H1 (cell line): ENCODE measurements at regions of chr18 and their contacts with region 1.

Region 1: GRCh38 chr18:46939337-46939963 is 22.0 kb downstream of the KATNAL2 start:
- DNase-seq: no peak
- H3K4me3 ChIP-seq: no peak overlapping the region
- H3K27ac ChIP-seq: no peak overlapping the region
- H3K4me1 ChIP-seq: peaks cover 0 to 5% (median 2%) of the 10 kb centered on the region in 4 experiments; a peak in 3 of 7 replicates
- H3K27me3 ChIP-seq: no peaks in the 10 kb centered on the region
- CTCF ChIP-seq: no peak
- EP300 ChIP-seq: no peak
- POLR2A ChIP-seq: no peak
- RAD21 ChIP-seq: no peak

Region 2: DNA sequence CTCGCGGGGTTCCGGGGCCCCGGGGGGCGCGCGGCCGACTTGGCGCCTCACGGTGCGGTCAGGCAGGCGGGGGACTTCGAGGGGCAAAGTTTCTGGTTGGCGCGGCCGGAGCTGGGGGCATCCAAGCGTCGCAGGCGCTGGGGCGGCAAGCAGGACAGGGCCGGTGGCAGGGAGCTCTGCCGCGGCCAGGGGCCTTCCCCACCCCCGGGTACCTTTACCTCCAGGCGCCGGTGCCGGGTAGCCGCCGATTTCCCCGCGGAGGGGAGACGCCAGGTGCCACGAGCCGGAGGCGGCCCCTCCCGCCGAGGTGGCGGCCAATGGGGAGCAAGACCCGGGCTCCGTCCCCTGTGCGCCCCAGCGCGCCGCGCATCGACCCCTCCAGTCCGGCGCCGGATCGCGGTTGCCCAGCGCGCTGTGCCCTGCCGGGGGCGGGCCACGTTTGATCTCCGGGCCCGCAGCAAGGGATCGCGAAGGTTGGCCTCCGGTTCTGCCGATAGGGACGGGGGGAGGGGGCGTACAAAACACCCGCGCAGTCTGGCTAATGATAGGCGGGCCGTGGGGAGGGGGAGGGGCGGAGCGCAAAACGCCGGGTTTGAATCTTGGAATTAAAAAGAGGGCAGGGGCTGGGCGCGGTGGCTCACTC is 182.8 kb before region 1 on chr18 and contains the start of gene ST8SIA5:
- CTCF ChIA-PET with region 1: no interaction called
- POLR2A ChIA-PET with region 1: no interaction called
- DNase-seq: peak; percentile 46 to 88
- H3K4me3 ChIP-seq: peak within 1 kb of the TSS; percentile 26 to 67 (median 53)
- H3K27ac ChIP-seq: no peak within 1 kb of the TSS
- H3K4me1 ChIP-seq: peaks cover 0 to 12% (median 7%) of the 10 kb centered on the region in 4 experiments; a peak in 5 of 7 replicates
- H3K27me3 ChIP-seq: peaks cover 17 to 56% (median 40%) of the 10 kb centered on the region in 4 experiments
- CTCF ChIP-seq: no peak
- EP300 ChIP-seq: no peak
- POLR2A ChIP-seq: no peak
- RAD21 ChIP-seq: no peak; a peak in 1 of 4 replicates
- total RNA-seq, gene ST8SIA5: 6.3 and 7.0 TPM in 2 replicates

Region 3: DNA sequence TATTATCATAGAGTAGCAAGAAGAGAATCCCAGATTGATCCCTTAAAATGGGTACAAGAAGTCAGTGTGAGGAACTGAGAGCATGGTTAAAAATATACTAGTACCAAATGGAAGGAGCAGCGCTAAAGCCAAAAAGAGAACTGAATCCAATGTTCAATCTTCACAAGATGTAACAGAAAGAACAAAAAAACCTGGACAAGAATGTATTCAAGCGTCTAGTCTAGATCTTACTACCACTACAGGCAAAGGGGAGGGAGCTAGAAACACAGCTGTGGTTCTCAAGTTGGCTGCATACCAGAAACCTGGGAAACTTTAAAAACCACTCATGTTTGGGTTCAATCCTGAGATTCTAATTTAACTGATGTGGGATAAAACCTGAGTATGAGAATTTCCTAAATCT is 79.6 kb before region 1 on chr18:
- CTCF ChIA-PET with region 1: no interaction called
- POLR2A ChIA-PET with region 1: no interaction called
- DNase-seq: no peak
- H3K4me3 ChIP-seq: no peak overlapping the region
- H3K27ac ChIP-seq: no peak overlapping the region
- H3K4me1 ChIP-seq: no peaks in the 10 kb centered on the region
- H3K27me3 ChIP-seq: no peaks in the 10 kb centered on the region
- CTCF ChIP-seq: no peak
- EP300 ChIP-seq: no peak
- POLR2A ChIP-seq: no peak
- RAD21 ChIP-seq: no peak

Region 4: GRCh38 chr18:46891742-46892214 is 47.7 kb before region 1 on chr18:
- CTCF ChIA-PET with region 1: no interaction called
- POLR2A ChIA-PET with region 1: no interaction called
- DNase-seq: no peak
- H3K4me3 ChIP-seq: no peak overlapping the region
- H3K27ac ChIP-seq: no peak overlapping the region
- H3K4me1 ChIP-seq: no peaks in the 10 kb centered on the region
- H3K27me3 ChIP-seq: no peaks in the 10 kb centered on the region
- CTCF ChIP-seq: no peak
- EP300 ChIP-seq: no peak
- POLR2A ChIP-seq: no peak
- RAD21 ChIP-seq: no peak

Region 5: GRCh38 chr18:46917108-46917802 is 22.2 kb before region 1 on chr18 and contains the starts of genes KATNAL2 and PIAS2:
- CTCF ChIA-PET with region 1: interaction called, 3 read pairs
- POLR2A ChIA-PET with region 1: interaction called, 13 read pairs
- DNase-seq: peak; percentile 21 to 87
- H3K4me3 ChIP-seq: peak within 1 kb of the TSS; percentile 75 to 85 (median 82)
- H3K27ac ChIP-seq: peak within 1 kb of the TSS; percentile 96
- H3K4me1 ChIP-seq: peaks cover 3 to 14% (median 10%) of the 10 kb centered on the region in 4 experiments; a peak in 5 of 7 replicates
- H3K27me3 ChIP-seq: no peaks in the 10 kb centered on the region
- CTCF ChIP-seq: no peak
- EP300 ChIP-seq: 0 out of 3 replicates have a peak, but pooled peaks of 1 of the 2 experiments have one; percentile 11
- POLR2A ChIP-seq: peak; percentile 85 to 87
- RAD21 ChIP-seq: no peak; a peak in 1 of 4 replicates
- total RNA-seq, gene KATNAL2: 8.8 and 15.2 TPM in 2 replicates
- total RNA-seq, gene PIAS2: 52.9 and 53.9 TPM in 2 replicates

Region 6: GRCh38 chr18:46950064-46950656 is 10.7 kb after region 1 on chr18:
- CTCF ChIA-PET with region 1: interaction called, 22 read pairs
- POLR2A ChIA-PET with region 1: interaction called, 3 read pairs
- DNase-seq: no peak
- H3K4me3 ChIP-seq: no peak overlapping the region
- H3K27ac ChIP-seq: no peak overlapping the region
- H3K4me1 ChIP-seq: peaks cover 0 to 7% (median 0%) of the 10 kb centered on the region in 4 experiments; a peak in 2 of 7 replicates
- H3K27me3 ChIP-seq: no peaks in the 10 kb centered on the region
- CTCF ChIP-seq: peak in 2 of 3 experiments; percentile 52 to 58; a peak in 2 of 4 replicates
- EP300 ChIP-seq: no peak
- POLR2A ChIP-seq: no peak
- RAD21 ChIP-seq: peak; percentile 47 to 63

Region 7: DNA sequence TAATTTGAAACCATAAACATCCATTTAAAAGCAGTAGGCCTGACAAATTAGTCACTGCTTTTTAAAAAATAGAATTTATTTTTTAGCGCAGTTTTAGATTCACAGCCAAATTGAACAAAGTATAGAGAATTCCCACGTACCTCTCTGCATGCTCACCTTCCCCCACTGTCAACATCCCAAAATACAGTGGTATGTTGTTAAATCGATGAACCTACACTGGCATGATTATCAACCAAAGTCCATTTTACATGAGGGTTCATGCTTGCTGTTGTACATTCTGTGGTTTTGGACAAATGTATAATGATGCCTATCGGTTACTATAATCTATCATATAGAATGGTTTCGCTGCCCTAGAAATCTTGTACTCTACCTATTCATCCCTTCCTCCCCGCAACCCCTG is 101.5 kb after region 1 on chr18:
- CTCF ChIA-PET with region 1: no interaction called
- POLR2A ChIA-PET with region 1: no interaction called
- DNase-seq: no peak
- H3K4me3 ChIP-seq: no peak overlapping the region
- H3K27ac ChIP-seq: no peak overlapping the region
- H3K4me1 ChIP-seq: no peaks in the 10 kb centered on the region
- H3K27me3 ChIP-seq: no peaks in the 10 kb centered on the region
- CTCF ChIP-seq: no peak
- EP300 ChIP-seq: no peak
- POLR2A ChIP-seq: no peak
- RAD21 ChIP-seq: no peak